PC-3 (cell line): ENCODE measurements at regions of chr2 and their contacts with region 1.

Region 1: GRCh38 chr2:45993476-45993991 is 303.7 kb upstream of the EPAS1 start:
- DNase-seq: peak; percentile 86
- ATAC-seq: no peak
- H3K4me3 ChIP-seq: no peak overlapping the region
- H3K27ac ChIP-seq: peak overlapping the region; percentile 92
- H3K4me1 ChIP-seq: peaks cover 30% of the 10 kb centered on the region
- H3K27me3 ChIP-seq: no peaks in the 10 kb centered on the region
- CTCF ChIP-seq: peak; percentile 91

Region 2: GRCh38 chr2:45505138-45505537 is 488.4 kb before region 1 on chr2:
- CTCF ChIA-PET with region 1: no interaction called
- POLR2A ChIA-PET with region 1: no interaction called
- intact Hi-C with region 1: no loop called
- DNase-seq: no peak
- ATAC-seq: no peak
- H3K4me3 ChIP-seq: no peak overlapping the region
- H3K27ac ChIP-seq: no peak overlapping the region
- H3K4me1 ChIP-seq: no peaks in the 10 kb centered on the region
- H3K27me3 ChIP-seq: no peaks in the 10 kb centered on the region
- CTCF ChIP-seq: no peak

Region 3: DNA sequence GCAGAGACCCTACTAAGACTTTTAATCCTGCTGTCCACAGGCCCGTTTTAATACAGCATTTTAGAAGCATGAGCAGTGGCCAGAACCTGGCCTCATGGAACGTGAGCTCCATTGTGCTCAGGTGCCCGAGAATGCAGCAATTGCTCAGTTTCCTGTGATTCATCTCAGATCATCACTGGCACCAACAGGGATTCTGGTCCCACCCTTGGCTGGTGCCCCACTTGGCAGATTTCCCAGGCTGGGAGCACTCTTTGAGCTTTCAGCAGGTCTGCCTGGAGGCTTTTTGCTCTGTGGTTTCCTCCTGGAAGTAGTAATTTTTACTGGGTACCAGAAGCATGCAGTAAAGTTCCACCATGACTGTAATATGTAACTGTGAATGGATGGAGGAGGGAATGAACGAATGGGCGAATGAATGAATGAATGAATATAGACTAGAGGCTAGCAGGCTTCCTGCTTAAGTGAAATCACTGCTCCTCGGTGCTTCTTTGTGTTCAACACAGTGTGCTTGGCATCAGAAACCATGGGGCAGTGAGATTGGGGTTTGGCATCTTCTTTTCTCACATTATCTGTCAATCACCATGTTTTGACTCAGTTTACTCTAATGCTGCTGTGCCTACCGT is 29.2 kb before region 1 on chr2:
- CTCF ChIA-PET with region 1: interaction called, 4 read pairs
- POLR2A ChIA-PET with region 1: no interaction called
- intact Hi-C with region 1: loop called (anchors 1 kb)
- DNase-seq: peak; percentile 100
- ATAC-seq: peak; percentile 89
- H3K4me3 ChIP-seq: no peak overlapping the region
- H3K27ac ChIP-seq: peak overlapping the region; percentile 65
- H3K4me1 ChIP-seq: peaks cover 51% of the 10 kb centered on the region
- H3K27me3 ChIP-seq: no peaks in the 10 kb centered on the region
- CTCF ChIP-seq: no peak

Region 4: GRCh38 chr2:46062637-46063412 is 69.3 kb after region 1 on chr2:
- CTCF ChIA-PET with region 1: no interaction called
- POLR2A ChIA-PET with region 1: no interaction called
- intact Hi-C with region 1: loop called (anchors 5 kb)
- DNase-seq: peak; percentile 92
- ATAC-seq: peak; percentile 73
- H3K4me3 ChIP-seq: no peak overlapping the region
- H3K27ac ChIP-seq: no peak overlapping the region
- H3K4me1 ChIP-seq: peaks cover 19% of the 10 kb centered on the region; the same call in 1 of the 2 replicates
- H3K27me3 ChIP-seq: no peaks in the 10 kb centered on the region
- CTCF ChIP-seq: peak; percentile 92

Region 5: GRCh38 chr2:46364797-46365457 is 371.4 kb after region 1 on chr2:
- CTCF ChIA-PET with region 1: interaction called, 7 read pairs
- POLR2A ChIA-PET with region 1: no interaction called
- intact Hi-C with region 1: loop called (anchors 1 kb)
- DNase-seq: peak; percentile 83
- ATAC-seq: peak; percentile 59
- H3K4me3 ChIP-seq: no peak overlapping the region
- H3K27ac ChIP-seq: no peak overlapping the region
- H3K4me1 ChIP-seq: peaks cover 11% of the 10 kb centered on the region
- H3K27me3 ChIP-seq: no peaks in the 10 kb centered on the region
- CTCF ChIP-seq: peak; percentile 95

Region 6: DNA sequence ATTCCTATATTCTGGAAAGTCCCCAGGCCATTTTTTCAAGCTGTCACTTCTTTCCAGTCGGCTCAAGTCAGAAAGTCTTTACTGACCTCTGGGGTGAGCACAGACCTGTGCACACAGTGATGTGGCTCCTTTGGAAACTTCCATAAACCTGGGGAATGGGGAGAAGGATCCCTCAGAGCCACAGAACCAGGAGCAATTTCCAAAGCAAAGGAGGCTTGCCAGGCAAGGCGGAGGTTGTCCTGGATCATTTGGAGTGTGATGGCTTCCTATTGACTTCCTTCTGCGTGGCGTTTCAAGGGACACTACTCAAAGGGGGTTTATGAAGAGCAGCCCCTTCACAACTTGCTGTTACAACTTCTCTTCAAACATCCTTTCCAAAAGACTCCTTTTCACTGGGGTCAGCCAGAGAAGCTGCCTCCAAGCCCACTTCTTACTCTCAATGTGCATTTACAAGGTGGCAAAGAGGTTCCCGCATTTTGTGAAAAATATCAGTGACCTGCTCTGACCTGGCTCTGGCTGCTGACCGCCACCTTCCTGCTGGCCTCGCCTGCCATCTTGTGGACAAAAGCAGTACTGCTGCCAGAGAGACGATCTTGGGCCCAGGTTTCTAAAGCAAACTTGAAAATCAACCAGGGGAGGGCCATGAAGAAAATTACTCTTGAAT is 467.6 kb after region 1 on chr2:
- CTCF ChIA-PET with region 1: no interaction called
- POLR2A ChIA-PET with region 1: no interaction called
- intact Hi-C with region 1: loop called (anchors 2 kb)
- DNase-seq: peak; percentile 82
- ATAC-seq: peak; percentile 62
- H3K4me3 ChIP-seq: no peak overlapping the region
- H3K27ac ChIP-seq: no peak overlapping the region
- H3K4me1 ChIP-seq: peaks cover 11% of the 10 kb centered on the region
- H3K27me3 ChIP-seq: no peaks in the 10 kb centered on the region
- CTCF ChIP-seq: peak; percentile 99